ENCODE measurements at regions of chr20 and their contacts with region 1.

Region 1: GRCh38 chr20:51172974-51173397 is 150.1 kb upstream of the KCNG1 start:
- DNase-seq: no peak

Region 2: DNA sequence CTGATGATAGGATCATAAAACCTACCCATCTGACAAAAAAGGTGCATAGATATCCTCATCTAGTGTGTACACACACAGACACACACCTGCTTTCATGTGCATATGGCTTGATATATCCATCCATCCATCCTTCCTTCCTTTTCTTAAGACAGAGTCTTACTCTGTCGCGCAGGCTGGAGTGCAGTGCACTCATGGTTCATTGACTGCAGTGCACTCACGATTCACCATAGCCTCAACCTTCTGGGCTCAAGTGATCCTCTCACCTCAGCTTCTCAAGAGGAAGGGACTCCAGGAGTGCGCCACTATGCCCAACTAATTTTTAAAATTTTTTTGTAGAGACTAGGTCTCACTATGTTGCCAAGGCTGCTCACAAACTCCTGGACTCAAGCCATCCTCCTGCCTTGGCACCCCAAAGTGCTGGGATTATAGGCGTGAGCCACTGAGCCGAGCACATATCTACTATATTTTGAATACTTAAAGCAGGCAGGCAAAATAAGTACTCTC is 268.9 kb before region 1 on chr20:
- intact Hi-C with region 1: loop called in 1 of 2 experiments (anchors 5 kb)
- DNase-seq: no peak

Region 3: GRCh38 chr20:51206032-51206662 is 33.2 kb after region 1 on chr20:
- intact Hi-C with region 1: no loop called
- DNase-seq: no peak

Measured in posterior vena cava (tissue), 2 donors.